ENCODE measurements at regions of chr15 and their contacts with region 1.

Region 1: GRCh38 chr15:57340682-57341259 is 35.5 kb upstream of the CGNL1 start:
- ATAC-seq: peak; percentile 63 to 81 (median 74)
- H3K4me3 ChIP-seq: no peak overlapping the region
- H3K27ac ChIP-seq: no peak overlapping the region
- H3K4me1 ChIP-seq: no peaks in the 10 kb centered on the region

Region 2: GRCh38 chr15:57227899-57228298 is 112.9 kb before region 1 on chr15:
- in situ Hi-C with region 1: no loop called
- ATAC-seq: peak in 5 of 8 experiments; percentile 20 to 65 (median 40)
- H3K4me3 ChIP-seq: no peak overlapping the region
- H3K27ac ChIP-seq: no peak overlapping the region
- H3K4me1 ChIP-seq: peaks cover 16 to 33% of the 10 kb centered on the region in 2 donors

Region 3: DNA sequence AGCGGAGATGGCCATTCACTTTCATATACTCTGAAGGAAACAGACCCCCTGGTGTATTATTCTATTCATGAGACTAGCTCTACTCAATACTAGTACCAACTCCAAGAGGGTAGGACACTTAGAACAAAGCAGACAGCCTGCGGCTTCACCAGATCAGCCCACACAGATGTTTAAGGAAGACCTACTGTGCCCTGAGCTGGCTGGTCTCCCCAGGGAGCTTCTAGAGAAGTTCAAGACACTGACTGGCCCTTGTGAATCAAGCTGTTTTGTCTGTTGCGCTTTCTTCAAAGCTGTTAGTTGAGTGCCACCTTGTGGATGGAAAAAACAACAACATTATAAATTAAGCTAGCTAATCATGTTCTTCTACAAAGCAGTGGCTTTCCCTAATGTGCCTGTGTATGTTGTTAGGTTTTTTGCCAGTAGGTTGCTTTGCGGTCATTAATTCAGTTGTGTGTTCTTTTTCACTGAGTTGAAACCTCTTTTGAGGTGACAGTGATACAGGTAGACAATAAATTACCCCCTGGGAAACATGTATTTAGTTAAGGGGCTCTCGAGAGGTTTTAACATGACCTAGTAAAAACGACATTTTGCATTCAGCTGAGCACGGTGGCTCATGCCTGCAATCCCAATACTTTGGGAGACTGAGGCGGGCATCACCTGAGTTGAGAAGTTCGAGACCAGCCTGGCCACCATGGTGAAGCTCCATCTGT is 186.8 kb after region 1 on chr15:
- in situ Hi-C with region 1: loop called in 8 of 9 experiments (anchors 5 to 25 kb)
- ATAC-seq: peak; percentile 66 to 87 (median 84)
- H3K4me3 ChIP-seq: no peak overlapping the region
- H3K27ac ChIP-seq: no peak overlapping the region
- H3K4me1 ChIP-seq: peaks cover 4 to 11% of the 10 kb centered on the region in 2 donors

Region 4: DNA sequence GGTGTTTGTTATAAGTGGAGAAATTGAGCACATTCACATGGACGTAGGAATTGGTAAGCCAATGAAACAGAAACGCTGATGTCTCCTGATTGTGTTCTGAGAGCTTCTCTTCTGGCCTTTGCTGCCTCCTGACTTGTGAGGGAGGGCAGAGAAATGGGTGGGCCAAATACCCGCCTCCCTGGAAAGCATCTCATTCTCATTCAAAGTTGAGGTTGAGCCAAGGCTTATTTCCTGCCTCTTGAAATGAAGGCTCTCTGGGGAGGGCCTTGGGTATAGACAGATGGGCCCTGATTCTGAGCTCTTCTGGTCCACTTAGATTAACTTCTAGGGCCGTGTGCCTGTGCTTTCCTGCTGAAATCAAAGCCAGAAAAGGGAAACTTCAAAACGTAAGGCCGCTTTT is 193.5 kb after region 1 on chr15:
- in situ Hi-C with region 1: loop called in 8 of 9 experiments (anchors 5 to 25 kb)
- ATAC-seq: no peak
- H3K4me3 ChIP-seq: no peak overlapping the region
- H3K27ac ChIP-seq: no peak overlapping the region
- H3K4me1 ChIP-seq: peaks cover 13 to 27% of the 10 kb centered on the region in 2 donors

Region 5: DNA sequence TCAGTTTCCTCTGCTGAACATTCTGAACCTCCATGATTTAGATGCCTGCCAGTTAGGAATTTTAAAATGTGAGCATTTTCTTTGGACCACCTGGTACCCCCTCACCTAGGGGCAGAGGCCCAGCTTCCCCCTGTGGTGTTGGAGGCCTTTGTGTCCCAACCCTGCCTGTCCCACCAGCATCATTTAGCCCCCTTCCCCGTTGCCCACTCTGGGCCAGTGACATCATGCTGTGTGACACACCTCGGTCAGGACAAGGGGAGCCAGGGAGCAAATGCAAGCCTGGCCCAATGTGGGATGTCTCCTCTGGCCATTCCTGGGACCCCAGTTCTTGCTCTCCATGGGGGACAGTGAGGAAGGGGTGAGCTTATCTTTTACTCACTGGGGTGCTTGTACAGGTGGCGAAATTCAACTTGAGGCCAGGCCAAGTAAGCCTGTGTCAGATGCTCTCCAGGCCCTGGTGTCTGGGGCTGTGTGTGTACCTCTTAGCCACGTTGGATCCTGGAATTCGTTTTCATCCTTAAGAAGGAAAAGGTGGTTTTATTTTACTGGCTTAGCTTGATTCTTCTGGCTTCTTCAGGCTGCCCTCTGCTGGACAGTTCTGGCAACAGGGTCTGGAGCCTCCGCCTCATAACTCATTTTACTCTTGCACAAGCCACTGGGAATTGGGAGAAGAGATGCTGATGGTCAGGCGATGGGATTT is 201.2 kb after region 1 on chr15:
- in situ Hi-C with region 1: loop called in 6 of 9 experiments (anchors 10 to 25 kb)
- ATAC-seq: peak; percentile 32 to 86 (median 69)
- H3K4me3 ChIP-seq: no peak overlapping the region
- H3K27ac ChIP-seq: no peak overlapping the region
- H3K4me1 ChIP-seq: peaks cover 2 to 18% of the 10 kb centered on the region in 2 donors

Measured in motor neuron (in vitro differentiated cells).